Naive thymus-derived CD4-positive, alpha-beta T cell (primary cell): ENCODE measurements at regions of chr2 and their contacts with region 1.

Region 1: GRCh38 chr2:12514631-12515433 is 201.9 kb upstream of the TRIB2 start:
- DNase-seq: peak in 4 of 9 donors; percentile 34 to 55 (median 46)
- ATAC-seq: peak; percentile 84
- H3K4me3 ChIP-seq: no peak overlapping the region
- H3K4me3 Mint-ChIP-seq: peak overlapping the region; percentile 9 to 77 (median 60)
- H3K27ac ChIP-seq: peak overlapping the region; percentile 35
- H3K27ac Mint-ChIP-seq: peak overlapping the region; percentile 23 to 89 (median 77)
- H3K4me1 ChIP-seq: peaks cover 33 to 40% of the 10 kb centered on the region in 2 donors
- H3K4me1 Mint-ChIP-seq: peaks cover 37 to 91% (median 75%) of the 10 kb centered on the region in 7 donors
- H3K27me3 ChIP-seq: no peaks in the 10 kb centered on the region
- H3K27me3 Mint-ChIP-seq: no peaks in the 10 kb centered on the region

Region 2: GRCh38 chr2:12486205-12487118 is 28.4 kb before region 1 on chr2:
- CTCF ChIA-PET with region 1: no interaction called
- POLR2A ChIA-PET with region 1: interaction called, 8 read pairs
- intact Hi-C with region 1: loop called in 1 of 2 experiments (anchors 2 kb)
- DNase-seq: no peak
- ATAC-seq: no peak
- H3K4me3 ChIP-seq: no peak overlapping the region
- H3K4me3 Mint-ChIP-seq: peak overlapping the region in 9 of 10 donors; percentile 22 to 84 (median 75)
- H3K27ac ChIP-seq: peak overlapping the region; percentile 42
- H3K27ac Mint-ChIP-seq: peak overlapping the region in 8 of 9 donors; percentile 83 to 97 (median 92)
- H3K4me1 ChIP-seq: peaks cover 28 to 63% of the 10 kb centered on the region in 2 donors
- H3K4me1 Mint-ChIP-seq: peaks cover 50 to 80% (median 70%) of the 10 kb centered on the region in 7 donors
- H3K27me3 ChIP-seq: no peaks in the 10 kb centered on the region
- H3K27me3 Mint-ChIP-seq: no peaks in the 10 kb centered on the region

Region 3: DNA sequence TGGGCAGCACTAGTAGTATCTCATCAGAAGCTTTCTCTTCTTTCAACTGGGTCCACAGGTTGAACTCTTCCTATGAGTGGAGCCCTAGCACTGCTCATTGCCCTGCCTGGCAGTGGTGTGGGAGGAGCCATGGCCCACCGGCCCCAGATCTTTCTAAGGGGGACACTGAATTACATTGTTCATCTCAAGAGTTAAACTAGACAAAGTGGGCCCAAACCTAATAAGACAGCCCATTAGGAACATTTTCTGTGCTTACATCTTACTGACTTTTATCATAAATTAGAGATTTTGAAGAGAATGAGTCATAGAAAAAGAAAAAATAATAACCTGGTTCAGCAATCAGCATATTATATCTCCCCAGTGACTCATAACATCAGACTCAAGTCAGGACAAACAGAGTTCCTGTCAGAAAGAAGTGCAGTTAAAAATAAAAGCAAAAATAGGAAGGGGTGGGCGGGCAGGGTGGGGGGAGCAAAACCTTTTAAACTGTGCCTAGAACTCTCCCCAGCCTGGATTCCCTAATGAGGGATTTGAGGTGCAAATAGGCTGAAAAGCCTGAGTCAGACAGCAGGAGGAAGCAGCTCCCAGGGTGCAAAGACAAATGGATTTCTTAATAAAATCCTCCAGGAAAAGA is 40.3 kb after region 1 on chr2:
- CTCF ChIA-PET with region 1: no interaction called
- POLR2A ChIA-PET with region 1: interaction called, 3 read pairs
- intact Hi-C with region 1: loop called in 1 of 2 experiments (anchors 5 kb)
- DNase-seq: peak in 1 of 9 donors; percentile 32
- ATAC-seq: peak; percentile 27
- H3K4me3 ChIP-seq: no peak overlapping the region
- H3K4me3 Mint-ChIP-seq: peak overlapping the region in 7 of 10 donors; percentile 5 to 66 (median 26)
- H3K27ac ChIP-seq: no peak overlapping the region
- H3K27ac Mint-ChIP-seq: peak overlapping the region in 8 of 9 donors; percentile 36 to 89 (median 74)
- H3K4me1 ChIP-seq: peaks cover 8 to 26% of the 10 kb centered on the region in 2 donors
- H3K4me1 Mint-ChIP-seq: peaks cover 25 to 62% (median 43%) of the 10 kb centered on the region in 7 donors
- H3K27me3 ChIP-seq: no peaks in the 10 kb centered on the region
- H3K27me3 Mint-ChIP-seq: no peaks in the 10 kb centered on the region